Mammary epithelial cell (primary cell): ENCODE measurements at regions of chr1 and their contacts with region 1.

Region 1: DNA sequence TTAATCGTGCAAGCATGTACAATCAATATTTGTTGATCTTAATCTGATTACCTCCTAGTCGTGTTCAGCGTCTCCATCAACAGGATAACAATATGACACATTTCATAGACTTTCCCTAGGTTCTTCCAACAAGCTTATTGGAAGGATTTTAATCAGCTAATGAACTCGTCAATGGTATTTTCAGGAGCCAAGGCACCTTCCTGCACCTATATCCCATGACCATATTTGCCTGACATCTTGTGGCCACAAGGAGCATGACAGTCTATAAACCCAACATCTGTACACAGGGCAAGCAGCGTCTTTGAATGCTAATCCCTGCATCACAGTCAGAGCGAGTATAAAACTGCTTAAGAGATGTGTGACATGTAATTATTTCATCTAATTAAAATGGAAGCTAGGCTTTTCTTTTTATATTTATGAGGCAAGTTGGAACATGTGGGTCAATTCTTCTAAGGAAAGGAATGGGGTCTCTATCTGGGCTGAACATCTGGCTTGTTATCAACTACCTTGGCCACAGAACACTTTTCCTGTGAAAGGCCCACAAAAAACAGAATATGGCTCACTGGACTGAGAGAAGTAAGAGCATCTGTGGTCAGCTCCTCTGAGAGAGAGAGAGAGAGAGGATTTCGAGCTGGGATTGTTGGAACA is 388.8 kb downstream of the NTNG1 start:
- DNase-seq: peak; percentile 70
- H3K4me3 ChIP-seq: no peak overlapping the region
- H3K27ac ChIP-seq: peak overlapping the region; percentile 99
- H3K4me1 ChIP-seq: peaks cover 50% of the 10 kb centered on the region
- H3K27me3 ChIP-seq: no peaks in the 10 kb centered on the region
- CTCF ChIP-seq: peak; percentile 89 to 94

Region 2: DNA sequence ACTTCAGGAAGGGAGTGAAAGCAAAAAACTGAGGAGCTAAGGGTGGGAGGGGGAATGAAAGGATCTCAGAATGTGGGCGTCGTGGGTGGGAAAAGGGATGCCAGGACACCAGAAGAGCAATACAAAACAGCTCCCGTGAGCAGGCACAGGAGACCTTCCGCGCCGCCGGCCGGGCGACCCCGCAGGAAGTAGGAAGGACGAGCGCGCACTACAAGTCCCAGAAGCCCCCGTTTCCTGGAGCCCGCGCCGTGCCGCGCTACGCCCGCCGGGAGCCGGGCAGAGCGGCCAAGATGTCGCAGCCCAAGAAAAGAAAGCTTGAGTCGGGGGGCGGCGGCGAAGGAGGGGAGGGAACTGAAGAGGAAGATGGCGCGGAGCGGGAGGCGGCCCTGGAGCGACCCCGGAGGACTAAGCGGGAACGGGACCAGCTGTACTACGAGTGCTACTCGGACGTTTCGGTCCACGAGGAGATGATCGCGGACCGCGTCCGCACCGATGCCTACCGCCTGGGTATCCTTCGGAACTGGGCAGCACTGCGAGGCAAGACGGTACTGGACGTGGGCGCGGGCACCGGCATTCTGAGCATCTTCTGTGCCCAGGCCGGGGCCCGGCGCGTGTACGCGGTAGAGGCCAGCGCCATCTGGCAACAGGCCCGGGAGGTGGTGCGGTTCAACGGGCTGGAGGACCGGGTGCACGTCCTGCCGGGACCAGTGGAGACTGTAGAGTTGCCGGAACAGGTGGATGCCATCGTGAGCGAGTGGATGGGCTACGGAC is 473.0 kb before region 1 on chr1 and contains the start of gene PRMT6:
- CTCF ChIA-PET with region 1: no interaction called
- dilution Hi-C with region 1: no loop called
- in situ Hi-C with region 1: no loop called
- intact Hi-C with region 1: loop called (anchors 5 kb)
- DNase-seq: peak; percentile 69
- H3K4me3 ChIP-seq: peak within 1 kb of the TSS; percentile 87 to 99 (median 96)
- H3K27ac ChIP-seq: peak within 1 kb of the TSS; percentile 61
- H3K4me1 ChIP-seq: peaks cover 9% of the 10 kb centered on the region
- H3K27me3 ChIP-seq: no peaks in the 10 kb centered on the region
- CTCF ChIP-seq: peak in 1 of 2 donors; percentile 11
- total RNA-seq, gene PRMT6: 14.4 to 17.7 TPM

Region 3: GRCh38 chr1:107158991-107159390 is 370.6 kb before region 1 on chr1:
- CTCF ChIA-PET with region 1: no interaction called
- dilution Hi-C with region 1: no loop called
- in situ Hi-C with region 1: no loop called
- intact Hi-C with region 1: loop called (anchors 5 kb)
- DNase-seq: no peak
- H3K4me3 ChIP-seq: no peak overlapping the region
- H3K27ac ChIP-seq: no peak overlapping the region
- H3K4me1 ChIP-seq: no peaks in the 10 kb centered on the region
- H3K27me3 ChIP-seq: no peaks in the 10 kb centered on the region
- CTCF ChIP-seq: no peak

Region 4: GRCh38 chr1:107430540-107431228 is 98.9 kb before region 1 on chr1:
- CTCF ChIA-PET with region 1: interaction called, 3 read pairs
- dilution Hi-C with region 1: no loop called
- in situ Hi-C with region 1: no loop called
- intact Hi-C with region 1: loop called (anchors 1 kb)
- DNase-seq: peak; percentile 24
- H3K4me3 ChIP-seq: no peak overlapping the region
- H3K27ac ChIP-seq: no peak overlapping the region
- H3K4me1 ChIP-seq: no peaks in the 10 kb centered on the region
- H3K27me3 ChIP-seq: no peaks in the 10 kb centered on the region
- CTCF ChIP-seq: peak; percentile 84

Region 5: GRCh38 chr1:107648071-107648470 is 118.4 kb after region 1 on chr1:
- CTCF ChIA-PET with region 1: interaction called, 3 read pairs
- dilution Hi-C with region 1: no loop called
- in situ Hi-C with region 1: no loop called
- intact Hi-C with region 1: loop called (anchors 5 kb)
- DNase-seq: peak; percentile 87
- H3K4me3 ChIP-seq: no peak overlapping the region
- H3K27ac ChIP-seq: peak overlapping the region; percentile 80
- H3K4me1 ChIP-seq: peaks cover 31% of the 10 kb centered on the region
- H3K27me3 ChIP-seq: no peaks in the 10 kb centered on the region
- CTCF ChIP-seq: no peak